CD4-positive, alpha-beta T cell (primary cell): ENCODE measurements at regions of chr19 and their contacts with region 1.

Region 1: GRCh38 chr19:16495982-16496612 is at the starts of genes C19orf44 and CALR3:
- DNase-seq: peak; percentile 93 to 98 (median 96)
- ATAC-seq: peak; percentile 99
- H3K4me3 ChIP-seq: peak within 1 kb of the TSS; percentile 64
- H3K4me3 Mint-ChIP-seq: peak within 1 kb of the TSS; percentile 90
- H3K27ac ChIP-seq: no peak within 1 kb of the TSS
- H3K27ac Mint-ChIP-seq: peak within 1 kb of the TSS; percentile 71
- H3K4me1 ChIP-seq: peaks cover 15% of the 10 kb centered on the region
- H3K4me1 Mint-ChIP-seq: peaks cover 14% of the 10 kb centered on the region
- H3K27me3 ChIP-seq: no peaks in the 10 kb centered on the region
- H3K27me3 Mint-ChIP-seq: no peaks in the 10 kb centered on the region
- CTCF ChIP-seq: no peak
- total RNA-seq, gene C19orf44: 0.78 to 1.0 TPM
- total RNA-seq, gene CALR3: not detected

Region 2: GRCh38 chr19:16338470-16339360 is 157.4 kb before region 1 on chr19:
- CTCF ChIA-PET with region 1: no interaction called
- POLR2A ChIA-PET with region 1: no interaction called
- intact Hi-C with region 1: no loop called
- DNase-seq: peak in 12 of 14 experiments; percentile 24 to 82 (median 50)
- ATAC-seq: peak; percentile 54
- H3K4me3 ChIP-seq: peak overlapping the region; percentile 40
- H3K4me3 Mint-ChIP-seq: peak overlapping the region; percentile 90
- H3K27ac ChIP-seq: peak overlapping the region; percentile 14 to 46
- H3K27ac Mint-ChIP-seq: peak overlapping the region; percentile 93
- H3K4me1 ChIP-seq: peaks cover 77% of the 10 kb centered on the region
- H3K4me1 Mint-ChIP-seq: peaks cover 72% of the 10 kb centered on the region
- H3K27me3 ChIP-seq: no peaks in the 10 kb centered on the region
- H3K27me3 Mint-ChIP-seq: no peaks in the 10 kb centered on the region
- CTCF ChIP-seq: peak; percentile 17

Region 3: DNA sequence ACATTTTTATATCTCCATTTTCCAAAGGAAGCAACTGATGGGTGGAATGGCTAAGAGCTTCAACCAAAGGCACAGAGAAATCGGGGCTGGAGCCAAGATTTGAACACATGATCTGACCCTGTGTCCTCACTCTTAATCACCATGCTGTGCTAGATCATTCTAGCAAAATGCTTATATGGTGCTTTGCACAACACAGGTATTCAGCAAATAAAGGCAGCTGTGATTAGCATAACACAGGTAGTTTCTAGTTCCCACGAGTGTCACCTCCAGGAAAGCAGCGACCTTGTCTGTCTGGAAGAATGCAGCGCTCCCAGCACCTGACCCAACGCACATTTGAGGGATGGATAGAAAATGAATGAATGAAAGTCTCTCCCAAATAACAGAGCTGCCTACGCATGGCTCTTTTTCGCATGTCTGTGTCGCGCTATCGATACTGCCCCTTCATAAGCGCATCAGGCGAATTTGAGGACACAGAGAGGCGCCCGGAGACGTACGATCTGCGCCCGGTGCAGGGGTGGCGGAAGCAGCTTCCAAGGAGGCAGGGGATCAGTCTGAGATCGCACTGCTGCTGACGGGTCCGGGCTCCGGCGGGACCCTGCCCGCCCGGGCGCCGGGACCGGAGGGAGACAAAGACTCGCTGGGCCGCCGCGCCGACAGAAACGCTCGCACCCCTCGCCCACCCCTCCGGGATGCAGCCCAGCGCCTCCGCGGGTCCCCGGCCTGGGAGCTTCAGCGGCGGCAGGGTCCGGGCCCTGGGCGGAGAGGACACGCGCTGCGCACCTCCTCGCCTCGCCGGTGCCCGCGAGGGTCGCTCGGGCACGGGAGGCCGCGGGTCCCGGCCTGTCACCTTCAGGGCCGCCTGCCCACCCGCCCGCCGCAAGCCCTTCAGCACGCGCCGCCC is 24.9 kb before region 1 on chr19:
- CTCF ChIA-PET with region 1: no interaction called
- POLR2A ChIA-PET with region 1: no interaction called
- intact Hi-C with region 1: loop called in 1 of 2 experiments (anchors 1 kb)
- DNase-seq: peak in 9 of 14 experiments; percentile 5 to 51 (median 22)
- ATAC-seq: peak; percentile 12
- H3K4me3 ChIP-seq: peak overlapping the region; percentile 74
- H3K4me3 Mint-ChIP-seq: peak overlapping the region; percentile 91
- H3K27ac ChIP-seq: no peak overlapping the region
- H3K27ac Mint-ChIP-seq: peak overlapping the region; percentile 73
- H3K4me1 ChIP-seq: peaks cover 38% of the 10 kb centered on the region
- H3K4me1 Mint-ChIP-seq: peaks cover 39% of the 10 kb centered on the region
- H3K27me3 ChIP-seq: no peaks in the 10 kb centered on the region
- H3K27me3 Mint-ChIP-seq: no peaks in the 10 kb centered on the region
- CTCF ChIP-seq: no peak

Region 4: DNA sequence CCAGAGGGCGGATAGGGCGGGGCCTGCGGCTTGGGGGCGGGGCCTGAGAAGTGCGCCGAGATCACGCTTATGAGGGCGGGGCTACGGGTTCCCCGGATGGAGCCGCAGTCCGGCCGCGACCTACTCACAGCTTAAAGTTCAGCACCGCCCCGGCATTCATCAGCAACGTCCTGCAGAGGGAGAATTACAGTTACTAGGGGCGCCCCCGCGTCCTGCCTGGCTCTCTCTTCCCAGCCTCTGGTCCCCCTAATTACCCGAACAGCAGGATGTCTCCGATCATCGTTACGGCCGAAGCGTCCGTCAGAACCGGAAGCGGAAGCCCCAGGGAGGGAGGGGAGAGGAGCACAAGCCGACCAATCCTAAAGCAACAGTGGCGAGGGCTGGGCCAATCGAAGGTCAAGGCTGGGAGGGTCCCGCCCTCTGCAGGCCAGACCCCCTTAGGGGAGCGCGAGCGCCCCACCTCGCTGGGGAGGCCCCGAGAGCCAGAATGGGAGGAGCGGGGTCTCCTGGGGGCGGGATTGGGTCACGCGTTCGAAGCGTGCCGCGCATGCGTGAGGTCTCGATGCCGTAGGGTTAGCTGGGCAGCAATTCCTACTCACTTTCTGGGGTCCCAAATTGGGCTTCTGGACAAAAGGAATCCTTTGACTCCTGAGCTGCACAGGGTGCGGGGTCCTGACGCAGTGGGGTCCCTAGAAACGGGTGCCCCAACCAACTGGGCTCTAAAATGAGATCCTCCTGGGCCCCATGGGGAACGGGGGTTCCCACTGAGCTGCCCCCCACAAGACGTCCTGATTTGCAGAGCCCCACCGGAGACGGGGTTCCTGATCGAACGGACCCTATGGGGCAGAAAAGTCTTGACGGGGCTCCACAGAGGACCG is 164.0 kb after region 1 on chr19 and contains the start of gene SMIM7:
- CTCF ChIA-PET with region 1: no interaction called
- POLR2A ChIA-PET with region 1: interaction called, 11 read pairs
- intact Hi-C with region 1: loop called in 1 of 2 experiments (anchors 1 kb)
- DNase-seq: peak; percentile 97 to 100 (median 98)
- ATAC-seq: peak; percentile 96
- H3K4me3 ChIP-seq: peak within 1 kb of the TSS; percentile 92
- H3K4me3 Mint-ChIP-seq: peak within 1 kb of the TSS; percentile 100
- H3K27ac ChIP-seq: peak within 1 kb of the TSS; percentile 75 to 93
- H3K27ac Mint-ChIP-seq: peak within 1 kb of the TSS; percentile 98
- H3K4me1 ChIP-seq: peaks cover 51% of the 10 kb centered on the region
- H3K4me1 Mint-ChIP-seq: peaks cover 50% of the 10 kb centered on the region
- H3K27me3 ChIP-seq: no peaks in the 10 kb centered on the region
- H3K27me3 Mint-ChIP-seq: no peaks in the 10 kb centered on the region
- CTCF ChIP-seq: no peak
- total RNA-seq, gene SMIM7: 44.3 to 47.4 TPM